ENCODE measurements at regions of chr7 and their contacts with region 1.

Region 1: DNA sequence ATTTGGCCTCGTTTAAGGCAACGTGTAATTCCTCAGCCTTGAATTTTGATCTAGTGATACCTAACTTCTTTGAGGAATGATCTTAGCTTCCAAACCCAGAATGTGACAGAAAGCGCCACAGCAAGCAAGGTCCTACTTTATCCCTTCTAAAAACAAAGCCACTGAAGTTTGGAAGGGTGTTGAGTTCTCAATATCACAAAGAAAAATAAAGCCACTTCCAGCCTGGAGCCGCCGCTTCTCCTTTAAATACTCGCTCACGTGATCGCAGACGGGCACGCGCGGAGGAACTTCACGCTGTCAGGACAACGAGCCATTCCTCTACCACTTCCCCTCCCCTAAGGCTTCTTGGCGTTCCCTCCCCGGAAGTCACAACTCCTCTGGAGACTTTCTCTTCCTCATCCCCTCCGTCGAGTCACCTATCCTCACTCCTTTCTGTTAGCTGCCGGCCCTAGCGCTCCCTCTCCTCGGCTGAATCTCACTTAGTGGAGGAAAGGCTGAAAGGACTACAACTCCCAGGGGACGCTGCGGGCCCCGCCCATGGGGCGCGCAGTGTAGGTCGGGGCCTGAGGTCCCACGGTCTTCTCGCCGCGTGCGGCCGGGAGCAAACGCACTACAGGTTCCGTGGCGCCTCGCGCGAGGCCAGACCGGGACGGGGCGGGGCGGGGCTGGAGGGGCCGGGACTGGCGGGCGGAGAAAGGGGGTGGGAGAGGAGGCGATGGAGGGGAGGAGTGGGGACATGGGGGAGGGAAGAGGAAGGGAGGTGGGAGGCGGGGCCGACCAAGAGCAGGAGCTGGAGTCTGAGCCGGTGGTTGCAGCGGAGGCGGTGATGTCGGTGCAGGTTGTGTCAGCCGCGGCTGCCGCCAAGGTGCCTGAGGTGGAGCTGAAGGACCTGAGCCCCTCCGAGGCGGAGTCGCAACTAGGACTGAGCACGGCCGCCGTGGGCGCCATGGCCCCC is at the start of gene AHCYL2:
- DNase-seq: peak; percentile 98 to 99 (median 98)
- H3K4me3 ChIP-seq: peak within 1 kb of the TSS in 3 of 4 donors; percentile 71 to 79 (median 73)
- H3K27ac ChIP-seq: peak within 1 kb of the TSS; percentile 78 to 97 (median 95)
- H3K4me1 ChIP-seq: peaks cover 5 to 18% of the 10 kb centered on the region in 2 donors
- H3K27me3 ChIP-seq: no peaks in the 10 kb centered on the region
- CTCF ChIP-seq: no peak
- POLR2A ChIP-seq: peak; percentile 9 to 69
- total RNA-seq, gene AHCYL2: 13.8 to 57.1 (median 23.5) TPM

Region 2: DNA sequence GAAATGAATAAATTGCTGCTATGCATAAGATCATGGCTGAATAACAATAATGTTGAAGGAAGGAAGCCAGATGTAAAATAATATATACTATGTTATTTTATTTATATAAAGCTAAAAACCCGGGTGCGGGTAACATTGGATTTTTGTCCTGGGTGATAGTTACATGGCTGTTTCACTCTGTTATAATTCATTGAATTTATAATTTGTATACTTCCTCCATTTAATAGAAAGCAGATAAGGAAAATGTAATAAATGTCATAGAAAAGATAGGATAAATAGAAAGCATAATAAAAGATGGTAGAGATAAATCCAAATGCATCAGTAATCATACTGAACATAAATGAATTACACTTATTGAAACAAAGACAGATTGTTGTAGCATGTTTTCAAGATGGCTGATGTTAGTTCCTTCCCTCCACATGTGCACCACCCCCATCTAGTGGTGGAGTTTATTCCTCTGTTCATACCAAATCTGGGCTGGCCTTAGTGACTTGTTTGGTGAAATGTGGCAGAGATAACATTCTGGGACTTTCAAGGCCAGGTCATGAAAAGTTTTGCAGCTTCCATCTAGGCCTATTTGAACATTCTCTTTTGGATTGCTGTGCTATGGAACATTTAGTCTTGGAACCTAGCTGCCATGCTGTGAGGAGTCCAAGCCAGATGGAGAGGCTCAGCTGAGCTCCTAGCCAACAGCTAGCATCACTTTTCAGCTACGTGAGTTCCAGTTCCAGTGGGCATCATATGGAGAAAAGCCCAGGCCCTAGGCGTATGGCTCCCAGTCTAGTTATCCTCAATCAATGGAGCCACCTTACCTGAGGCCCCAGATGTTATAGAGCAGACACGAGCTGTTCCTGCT is 47.2 kb after region 1 on chr7:
- intact Hi-C with region 1: loop called (anchors 5 to 10 kb)
- DNase-seq: peak; percentile 47 to 80 (median 75)
- H3K4me3 ChIP-seq: no peak overlapping the region
- H3K27ac ChIP-seq: no peak overlapping the region
- H3K4me1 ChIP-seq: no peaks in the 10 kb centered on the region
- H3K27me3 ChIP-seq: no peaks in the 10 kb centered on the region
- CTCF ChIP-seq: peak; percentile 57 to 79 (median 72)
- POLR2A ChIP-seq: no peak

Measured in adrenal gland (tissue), 19 donors.